ENCODE measurements at regions of chr2 and their contacts with region 1.

Region 1: GRCh38 chr2:85015653-85016360 is 44.8 kb downstream of the KCMF1 start:
- DNase-seq: no peak
- ATAC-seq: peak in 1 of 4 donors; percentile 49
- H3K4me3 ChIP-seq: no peak overlapping the region
- H3K27ac ChIP-seq: peak overlapping the region; percentile 7
- H3K4me1 ChIP-seq: peaks cover 69% of the 10 kb centered on the region
- H3K27me3 ChIP-seq: no peaks in the 10 kb centered on the region
- CTCF ChIP-seq: peak; percentile 12

Region 2: DNA sequence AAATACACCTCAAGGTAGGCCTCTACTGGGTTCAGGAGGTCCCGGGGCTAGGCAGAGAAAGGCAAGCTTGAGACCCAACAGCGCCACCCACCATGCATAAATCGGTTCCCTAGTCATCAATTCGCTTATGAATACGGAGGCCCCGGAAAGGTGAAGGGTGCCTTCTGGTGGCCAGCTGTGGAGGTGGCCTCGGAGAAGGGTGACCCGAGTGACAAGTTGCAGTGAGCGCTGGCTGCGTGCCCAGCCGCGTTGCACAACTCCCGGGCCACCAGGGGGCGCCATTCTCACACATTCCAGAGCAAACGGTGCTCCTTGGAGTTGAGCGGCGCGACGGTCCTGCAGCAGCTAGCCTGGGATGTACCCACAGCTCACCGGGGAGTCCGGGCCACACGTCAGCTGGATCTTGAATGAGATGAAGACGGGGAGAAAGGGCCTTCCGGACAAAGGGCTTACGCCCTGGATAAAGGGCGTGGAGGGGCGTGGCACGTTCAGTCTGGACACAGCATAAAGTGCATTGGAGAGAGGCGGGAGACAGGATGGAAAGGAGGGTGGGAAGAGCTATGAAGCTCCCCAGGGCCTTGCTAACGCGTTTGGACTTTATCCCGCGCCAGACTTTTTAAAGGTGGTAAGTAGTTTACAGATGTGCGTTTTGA is 90.0 kb before region 1 on chr2:
- intact Hi-C with region 1: loop called in 1 of 2 experiments (anchors 2 kb)
- DNase-seq: peak; percentile 96
- ATAC-seq: peak; percentile 84 to 94 (median 87)
- H3K4me3 ChIP-seq: peak overlapping the region; percentile 55
- H3K27ac ChIP-seq: no peak overlapping the region
- H3K4me1 ChIP-seq: no peaks in the 10 kb centered on the region
- H3K27me3 ChIP-seq: no peaks in the 10 kb centered on the region
- CTCF ChIP-seq: peak; percentile 94

Region 3: DNA sequence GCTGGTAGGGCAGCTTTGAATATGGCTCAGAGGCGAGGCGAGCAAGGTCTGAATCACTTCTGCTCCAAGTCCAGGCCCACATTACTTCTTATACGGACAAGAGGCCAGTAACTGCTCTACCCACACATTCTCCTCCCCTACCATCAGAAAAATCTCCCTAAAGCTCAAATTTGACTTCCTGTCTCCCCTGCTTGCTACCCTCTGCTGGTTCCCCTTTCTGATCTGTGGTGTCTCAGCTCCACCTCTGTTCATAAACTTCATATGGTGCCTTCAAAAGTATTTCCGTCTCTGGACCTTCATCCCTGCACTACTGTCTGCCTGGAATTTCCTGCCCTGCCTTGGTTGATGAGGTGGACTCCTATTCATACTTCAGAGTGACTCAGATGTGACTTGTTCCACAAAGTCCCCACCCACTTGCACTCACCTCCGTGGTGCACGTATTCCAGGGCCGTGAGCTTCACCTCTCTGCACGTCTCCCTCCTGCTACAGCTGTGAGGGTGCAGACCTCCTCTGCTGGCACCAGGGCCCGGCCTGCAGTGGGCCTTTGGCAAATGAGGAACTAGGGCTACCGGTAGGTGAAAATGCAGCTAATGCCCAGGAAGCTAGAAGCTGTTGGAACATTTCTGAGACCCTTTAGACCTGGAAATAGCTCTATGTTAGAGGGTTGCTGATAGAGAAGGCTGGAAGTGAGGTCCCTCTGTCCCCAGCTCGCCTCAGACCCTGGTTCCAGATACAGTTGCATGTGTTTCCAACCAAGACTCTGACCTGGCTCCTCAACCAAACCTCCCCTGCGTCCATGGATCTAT is 69.4 kb before region 1 on chr2:
- intact Hi-C with region 1: no loop called
- DNase-seq: no peak
- ATAC-seq: no peak
- H3K4me3 ChIP-seq: no peak overlapping the region
- H3K27ac ChIP-seq: no peak overlapping the region
- H3K4me1 ChIP-seq: no peaks in the 10 kb centered on the region
- H3K27me3 ChIP-seq: no peaks in the 10 kb centered on the region
- CTCF ChIP-seq: no peak

Region 4: GRCh38 chr2:84970868-84971509 is 44.8 kb before region 1 on chr2 and contains the start of gene KCMF1:
- intact Hi-C with region 1: loop called (anchors 5 kb)
- DNase-seq: peak; percentile 84 to 93
- ATAC-seq: peak; percentile 78 to 83 (median 81)
- H3K4me3 ChIP-seq: peak within 1 kb of the TSS; percentile 89
- H3K27ac ChIP-seq: peak within 1 kb of the TSS; percentile 98
- H3K4me1 ChIP-seq: peaks cover 49% of the 10 kb centered on the region
- H3K27me3 ChIP-seq: no peaks in the 10 kb centered on the region
- CTCF ChIP-seq: no peak
- total RNA-seq, gene KCMF1: 89.0 to 197 (median 153) TPM

Region 5: GRCh38 chr2:85266146-85267041 is 250.6 kb after region 1 on chr2:
- intact Hi-C with region 1: no loop called
- DNase-seq: peak; percentile 70 to 86
- ATAC-seq: peak in 3 of 4 donors; percentile 53 to 79 (median 67)
- H3K4me3 ChIP-seq: no peak overlapping the region
- H3K27ac ChIP-seq: no peak overlapping the region
- H3K4me1 ChIP-seq: peaks cover 2% of the 10 kb centered on the region
- H3K27me3 ChIP-seq: no peaks in the 10 kb centered on the region
- CTCF ChIP-seq: peak; percentile 76

Measured in psoas muscle (tissue), 8 donors.